ENCODE measurements at regions of chr2 and their contacts with region 1.

Region 1: DNA sequence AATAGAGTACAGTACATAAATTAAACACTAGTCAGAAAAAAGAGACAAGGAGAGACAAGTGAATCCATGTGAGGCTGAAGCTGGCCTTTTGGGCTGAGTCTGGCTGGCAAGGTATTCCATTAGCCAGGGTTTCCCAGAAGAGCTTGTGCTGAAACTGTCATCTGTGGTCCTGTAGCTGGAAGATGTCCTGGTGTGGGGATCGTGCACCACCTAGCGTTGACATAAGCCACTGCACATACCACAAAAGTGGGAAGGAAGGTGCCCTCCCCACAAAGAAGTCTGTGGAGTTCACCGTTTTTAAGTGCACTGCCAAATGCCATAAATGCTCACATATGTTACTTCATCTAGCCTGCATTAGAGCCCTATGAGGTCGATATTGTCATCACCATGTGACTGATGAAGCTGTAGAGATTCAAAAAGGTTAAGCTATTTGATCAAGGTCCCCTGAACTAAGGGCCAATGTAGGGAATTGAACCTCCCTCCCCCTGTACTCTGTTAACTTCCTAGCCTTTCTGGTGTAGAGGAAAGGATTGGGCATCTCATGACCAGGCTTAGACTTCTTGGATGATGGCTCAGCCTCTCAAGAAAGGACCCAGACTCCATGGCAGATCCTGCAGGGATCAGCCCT is 31.9 kb upstream of the GALNT14 start:
- DNase-seq: peak; percentile 29 to 51
- ATAC-seq: peak in 7 of 8 donors; percentile 63 to 92 (median 83)
- H3K4me3 ChIP-seq: no peak overlapping the region
- H3K27ac ChIP-seq: no peak overlapping the region
- H3K4me1 ChIP-seq: no peaks in the 10 kb centered on the region
- H3K27me3 ChIP-seq: peaks cover 0 to 2% (median 0%) of the 10 kb centered on the region in 7 donors
- CTCF ChIP-seq: peak; percentile 83 to 93 (median 91)

Region 2: DNA sequence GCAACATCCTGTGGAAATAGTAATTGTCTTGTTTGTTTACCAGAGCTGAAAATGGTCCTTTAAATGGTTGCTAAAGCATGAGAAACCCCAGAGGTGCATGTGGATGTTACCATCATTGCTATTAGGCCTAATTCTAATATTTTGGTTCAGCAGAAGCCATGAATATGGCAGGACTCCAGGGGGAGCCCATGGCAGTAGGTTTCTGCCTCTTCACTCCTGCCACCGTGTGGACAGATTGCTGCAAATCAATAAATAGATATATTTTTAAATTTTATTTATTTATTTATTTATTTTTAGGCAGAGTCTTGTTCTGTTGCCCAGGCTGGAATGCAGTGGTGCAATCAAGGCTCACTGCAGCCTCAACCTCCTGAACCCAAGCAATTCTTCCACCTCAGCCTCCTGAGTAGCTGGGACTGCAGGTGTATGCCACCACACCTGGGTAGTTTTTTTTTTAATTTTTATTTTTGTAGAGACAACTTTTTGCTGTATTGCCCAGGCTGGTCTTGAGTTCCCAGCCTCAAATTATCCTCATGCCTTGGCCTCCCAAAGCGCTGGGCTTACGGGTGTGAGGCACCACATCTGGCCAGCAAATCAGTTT is 308.0 kb before region 1 on chr2:
- intact Hi-C with region 1: loop called in 2 of 10 experiments (anchors 10 kb)
- DNase-seq: peak in 1 of 2 donors; percentile 62
- ATAC-seq: peak in 2 of 8 donors; percentile 27 to 47
- H3K4me3 ChIP-seq: no peak overlapping the region
- H3K27ac ChIP-seq: no peak overlapping the region
- H3K4me1 ChIP-seq: peaks cover 0 to 13% (median 0%) of the 10 kb centered on the region in 9 donors
- H3K27me3 ChIP-seq: no peaks in the 10 kb centered on the region
- CTCF ChIP-seq: peak; percentile 35 to 83 (median 66)

Region 3: DNA sequence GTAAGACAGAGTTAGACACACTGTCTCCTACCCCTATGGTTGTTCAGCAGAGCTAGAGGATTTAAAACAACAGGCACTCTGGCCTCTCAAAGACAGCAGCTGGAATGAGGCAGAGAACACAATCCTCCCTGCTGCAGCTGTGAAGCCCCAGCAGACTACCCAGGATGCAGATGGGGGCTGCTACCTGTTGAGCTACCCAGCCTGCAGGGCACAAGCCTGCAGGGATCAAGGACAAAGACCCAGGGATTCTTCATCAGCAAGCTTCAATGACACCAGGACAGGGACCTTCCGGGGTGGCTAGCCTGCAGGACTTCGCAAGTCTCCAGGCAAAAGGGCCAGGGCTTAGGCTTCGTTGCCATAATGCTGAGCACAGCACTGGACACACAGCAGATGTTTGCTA is 59.2 kb before region 1 on chr2:
- intact Hi-C with region 1: no loop called
- DNase-seq: no peak
- ATAC-seq: no peak
- H3K4me3 ChIP-seq: no peak overlapping the region
- H3K27ac ChIP-seq: no peak overlapping the region
- H3K4me1 ChIP-seq: no peaks in the 10 kb centered on the region
- H3K27me3 ChIP-seq: peaks cover 0 to 5% (median 0%) of the 10 kb centered on the region in 7 donors
- CTCF ChIP-seq: no peak

Measured in heart right ventricle (tissue), 16 donors.